ENCODE measurements at regions of chr1 and their contacts with region 1.

Region 1: DNA sequence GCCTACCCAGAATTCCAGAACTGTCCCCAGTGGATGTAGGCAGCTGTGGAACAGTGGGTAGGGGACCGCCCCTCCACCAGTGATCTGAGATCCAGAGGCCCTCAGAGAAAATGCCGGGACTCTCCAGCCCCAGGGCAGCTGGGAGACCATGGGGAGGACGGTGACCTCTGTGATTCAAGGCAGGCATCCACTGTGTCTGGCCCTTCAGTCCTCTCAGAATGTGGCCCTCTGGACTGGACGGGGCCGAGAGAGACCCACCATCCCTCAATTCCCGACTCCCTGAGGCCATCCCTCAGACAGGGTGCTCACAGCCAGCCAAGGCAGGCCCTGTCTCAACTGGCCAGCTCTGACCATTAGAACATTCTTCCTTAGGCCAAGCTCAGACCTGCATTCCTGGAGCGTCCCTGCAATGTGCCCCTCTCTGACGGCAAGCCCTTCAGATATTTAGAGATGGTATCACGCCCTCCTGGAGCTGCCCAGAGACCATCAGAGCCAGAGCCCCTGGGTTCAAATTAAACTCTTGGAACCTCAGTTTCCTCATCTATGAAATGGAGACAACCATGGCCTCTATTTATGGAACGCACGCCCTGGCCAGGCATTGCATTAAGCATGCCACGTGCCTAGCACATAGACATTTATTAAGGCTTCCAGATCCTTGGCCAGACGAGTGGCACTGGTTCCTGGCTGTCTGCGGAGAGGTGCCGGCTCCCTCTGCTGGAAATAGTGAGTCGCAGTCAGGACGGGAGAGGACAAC is 9.6 kb upstream of the EPS8L3 start:
- DNase-seq: peak; percentile 82
- H3K4me3 Mint-ChIP-seq: no peak overlapping the region
- H3K27ac Mint-ChIP-seq: no peak overlapping the region
- H3K4me1 Mint-ChIP-seq: peaks cover 20% of the 10 kb centered on the region
- H3K27me3 Mint-ChIP-seq: peaks cover 13% of the 10 kb centered on the region

Region 2: GRCh38 chr1:109640285-109640865 is 132.9 kb before region 1 on chr1:
- CTCF ChIA-PET with region 1: interaction called, 112 read pairs
- POLR2A ChIA-PET with region 1: interaction called, 3 read pairs
- DNase-seq: peak; percentile 93
- H3K4me3 Mint-ChIP-seq: no peak overlapping the region
- H3K27ac Mint-ChIP-seq: no peak overlapping the region
- H3K4me1 Mint-ChIP-seq: peaks cover 21% of the 10 kb centered on the region
- H3K27me3 Mint-ChIP-seq: no peaks in the 10 kb centered on the region

Region 3: DNA sequence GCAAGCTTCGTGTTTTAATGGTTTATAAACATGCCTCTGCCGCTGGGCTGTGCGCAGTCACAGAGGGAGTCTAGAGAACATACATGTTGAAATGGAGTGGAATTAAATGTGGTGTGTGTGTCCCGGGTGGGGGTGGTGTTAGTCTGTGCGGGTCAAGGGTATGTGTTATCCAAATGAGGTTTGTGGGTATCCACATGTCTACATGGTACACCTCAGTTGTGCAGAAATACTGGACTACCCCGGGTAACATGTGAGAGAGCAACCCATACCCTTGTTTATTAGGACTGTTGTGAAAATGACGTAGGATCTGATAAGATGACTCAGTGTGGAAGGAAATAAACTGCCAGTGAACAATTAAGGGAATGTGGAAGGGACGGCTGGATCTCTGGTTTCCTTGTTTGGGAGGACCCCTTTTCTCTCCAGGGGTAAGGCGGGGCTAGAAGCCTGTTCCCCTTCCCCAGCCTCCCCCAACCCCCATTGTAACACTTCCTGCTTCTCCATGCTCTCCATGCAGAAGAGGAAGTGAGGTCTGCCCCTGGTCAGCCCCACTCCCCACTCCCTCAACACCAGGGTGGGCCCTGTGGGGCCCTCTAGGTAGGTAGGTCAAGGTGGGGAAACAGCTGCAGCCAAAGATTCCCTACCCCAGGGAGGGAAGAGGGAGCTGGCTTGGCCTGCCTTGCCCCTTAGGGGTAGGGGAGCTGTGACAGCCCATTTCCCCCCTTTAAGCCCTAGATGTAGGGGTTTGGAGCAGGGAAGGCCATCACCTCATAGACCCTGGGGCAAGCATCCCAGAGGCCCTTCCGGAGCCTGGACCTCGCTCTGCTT is 10.3 kb before region 1 on chr1:
- CTCF ChIA-PET with region 1: interaction called, 45 read pairs
- POLR2A ChIA-PET with region 1: no interaction called
- DNase-seq: no peak
- H3K4me3 Mint-ChIP-seq: no peak overlapping the region
- H3K27ac Mint-ChIP-seq: no peak overlapping the region
- H3K4me1 Mint-ChIP-seq: no peaks in the 10 kb centered on the region
- H3K27me3 Mint-ChIP-seq: no peaks in the 10 kb centered on the region

Region 4: DNA sequence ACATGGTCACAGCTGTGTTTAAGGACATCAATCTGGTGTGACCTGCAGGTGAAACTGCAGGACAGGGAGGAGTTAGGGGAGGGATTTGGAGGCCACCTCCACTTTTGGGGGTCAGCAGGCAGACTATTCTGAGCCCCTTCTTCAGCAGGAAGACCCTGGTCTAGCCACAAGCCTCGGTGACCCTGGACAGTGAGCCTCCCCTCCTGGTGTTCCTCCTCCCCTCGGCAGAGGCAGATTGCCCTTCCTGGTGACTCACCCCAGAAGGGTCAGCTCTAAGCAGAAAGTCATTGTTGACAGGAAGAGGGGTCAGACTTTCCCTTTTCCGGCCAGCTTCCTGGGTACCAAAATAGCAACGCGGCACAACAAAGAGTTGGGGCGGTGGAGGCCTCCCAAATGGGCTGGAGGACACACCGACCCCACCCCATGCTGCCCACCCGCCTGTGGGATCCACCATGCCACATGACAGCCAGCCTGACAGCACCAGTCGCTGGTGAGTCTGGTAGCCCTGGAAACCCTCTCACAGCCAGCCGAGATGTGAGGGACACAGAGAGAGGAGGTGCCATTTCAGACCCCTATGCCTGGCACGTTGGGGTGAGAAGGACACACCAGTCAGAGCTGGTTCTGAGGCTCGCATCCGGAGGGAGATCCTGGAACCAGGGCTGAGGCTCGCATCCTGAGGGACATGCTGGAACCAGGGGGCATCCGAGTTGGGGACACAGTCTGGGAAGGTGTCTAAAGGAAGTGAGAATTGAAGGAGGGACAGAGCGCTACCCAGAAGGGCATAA is 122.6 kb after region 1 on chr1:
- CTCF ChIA-PET with region 1: interaction called, 10 read pairs
- POLR2A ChIA-PET with region 1: no interaction called
- DNase-seq: no peak
- H3K4me3 Mint-ChIP-seq: no peak overlapping the region
- H3K27ac Mint-ChIP-seq: no peak overlapping the region
- H3K4me1 Mint-ChIP-seq: peaks cover 6% of the 10 kb centered on the region
- H3K27me3 Mint-ChIP-seq: no peaks in the 10 kb centered on the region

Region 5: GRCh38 chr1:109993885-109994284 is 220.6 kb after region 1 on chr1:
- CTCF ChIA-PET with region 1: interaction called, 475 read pairs
- POLR2A ChIA-PET with region 1: no interaction called
- DNase-seq: no peak
- H3K4me3 Mint-ChIP-seq: no peak overlapping the region
- H3K27ac Mint-ChIP-seq: no peak overlapping the region
- H3K4me1 Mint-ChIP-seq: peaks cover 13% of the 10 kb centered on the region
- H3K27me3 Mint-ChIP-seq: no peaks in the 10 kb centered on the region

Measured in activated CD4-positive, alpha-beta T cell treated with anti-CD3 and anti-CD28 coated beads, Interleukin-2, amount 10 ng/mL, durations not matched to agents 7 days and 5 days (primary cell).